Left cardiac atrium (tissue), 4 donors: ENCODE measurements at regions of chr19 and their contacts with region 1.

Region 1: DNA sequence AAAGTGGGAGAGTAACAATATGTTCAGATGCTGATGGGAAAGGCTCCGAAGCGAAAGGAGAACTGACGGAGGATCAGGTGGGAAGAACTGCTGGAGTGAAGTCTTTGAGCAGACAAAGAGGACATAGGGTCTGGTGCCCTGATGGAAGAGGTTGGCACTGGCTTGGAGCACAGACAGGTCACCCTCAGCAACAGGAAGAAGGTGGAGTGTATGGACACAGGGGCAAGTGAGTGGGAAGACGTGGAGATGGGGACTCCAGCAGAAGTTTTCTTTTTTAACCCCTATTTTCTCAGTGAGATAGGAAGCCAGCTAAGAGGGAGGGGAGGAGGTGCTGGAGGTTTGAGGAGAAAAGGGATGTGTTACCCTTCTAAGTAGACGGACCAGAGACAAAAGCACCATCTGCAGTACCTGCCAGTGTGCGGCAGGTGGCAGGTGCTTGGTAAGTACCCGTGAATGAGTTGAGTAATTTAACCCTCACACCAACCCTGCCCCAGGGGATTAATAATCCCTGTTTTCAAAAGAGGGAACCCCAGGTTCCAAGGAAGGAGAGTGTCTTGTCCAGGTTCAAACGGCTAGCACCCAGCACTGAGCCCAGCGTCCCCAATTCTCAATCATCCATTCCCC is 11.2 kb downstream of the HAS1 start:
- DNase-seq: no peak
- ATAC-seq: peak in 1 of 2 donors; percentile 0

Region 2: DNA sequence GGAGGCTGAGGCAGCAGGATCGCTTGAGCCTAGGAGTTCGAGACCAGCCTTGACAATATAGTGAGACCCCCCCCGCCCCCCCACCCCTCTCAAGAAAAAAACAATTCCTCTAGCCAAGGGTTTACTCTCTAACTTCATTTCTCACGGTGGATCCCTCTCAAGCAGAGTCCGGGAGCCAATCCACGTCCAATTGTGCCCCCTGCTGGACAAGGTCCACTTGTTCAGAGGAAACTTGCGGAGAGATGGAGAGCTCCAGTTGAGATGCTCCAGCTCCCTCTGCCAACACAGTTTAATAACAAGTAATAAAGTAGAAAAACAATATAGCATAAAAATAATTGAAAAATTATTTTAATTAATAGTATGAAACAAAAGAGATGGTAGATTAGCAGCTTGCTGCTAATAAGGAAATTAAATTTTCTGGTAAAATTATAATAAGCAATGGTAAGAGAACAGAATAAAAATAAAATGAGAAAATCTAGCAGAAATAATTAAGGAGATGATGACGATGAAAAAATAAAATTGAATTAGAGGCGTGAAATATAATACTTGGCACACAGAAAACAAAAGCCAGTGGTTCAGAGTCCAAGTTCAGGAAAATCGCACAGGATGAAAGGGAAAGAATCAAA is 51.5 kb before region 1 on chr19:
- intact Hi-C with region 1: no loop called
- DNase-seq: peak; percentile 78
- ATAC-seq: peak in 1 of 2 donors; percentile 67

Region 3: GRCh38 chr19:51784922-51785690 is 72.5 kb after region 1 on chr19:
- intact Hi-C with region 1: loop called in 1 of 2 experiments (anchors 10 kb)
- DNase-seq: peak; percentile 80
- ATAC-seq: peak; percentile 76 to 95

Region 4: GRCh38 chr19:51830274-51830673 is 117.7 kb after region 1 on chr19:
- intact Hi-C with region 1: no loop called
- DNase-seq: no peak
- ATAC-seq: peak in 1 of 2 donors; percentile 49